Activated CD4-positive, alpha-beta T cell treated with anti-CD3 and anti-CD28 coated beads for 36 hours (primary cell): ENCODE measurements at regions of chr2 and their contacts with region 1.

Region 1: DNA sequence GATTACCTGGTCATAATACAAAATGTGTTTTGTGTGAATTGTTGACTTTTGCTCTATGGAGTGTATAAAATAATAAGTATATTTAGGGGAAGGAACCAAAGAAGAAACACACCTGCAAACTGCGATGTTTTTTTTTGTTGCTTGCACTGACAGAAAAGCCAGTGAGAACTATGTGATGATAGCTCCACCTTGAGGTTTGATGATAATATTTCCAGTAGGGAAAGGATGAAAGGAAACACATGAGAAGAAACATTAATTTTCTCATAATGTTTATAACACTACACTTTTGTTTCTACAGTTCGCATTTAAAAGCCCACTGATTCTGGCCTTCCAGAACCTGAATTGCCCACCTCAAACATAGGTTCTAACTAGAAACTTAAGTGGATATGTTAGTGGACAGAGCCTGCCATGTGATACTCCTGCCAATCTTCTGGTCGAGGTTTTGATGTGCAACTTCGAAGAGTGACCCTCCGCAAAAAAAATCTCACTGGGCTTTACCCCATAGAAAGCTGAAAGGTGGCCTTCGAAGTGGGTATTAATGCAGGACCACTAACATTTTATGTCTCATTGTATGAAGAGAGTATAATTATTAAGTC is 476.4 kb upstream of the SPHKAP start:
- DNase-seq: no peak
- ATAC-seq: no peak
- H3K4me3 Mint-ChIP-seq: no peak overlapping the region
- H3K27ac Mint-ChIP-seq: no peak overlapping the region
- H3K4me1 Mint-ChIP-seq: no peaks in the 10 kb centered on the region
- H3K27me3 Mint-ChIP-seq: no peaks in the 10 kb centered on the region

Region 2: GRCh38 chr2:227939271-227940027 is 718.5 kb before region 1 on chr2:
- CTCF ChIA-PET with region 1: no interaction called
- POLR2A ChIA-PET with region 1: no interaction called
- intact Hi-C with region 1: loop called in 1 of 2 experiments (anchors 10 kb)
- DNase-seq: peak; percentile 27
- ATAC-seq: no peak
- H3K4me3 Mint-ChIP-seq: no peak overlapping the region
- H3K27ac Mint-ChIP-seq: no peak overlapping the region
- H3K4me1 Mint-ChIP-seq: no peaks in the 10 kb centered on the region
- H3K27me3 Mint-ChIP-seq: peaks cover 17% of the 10 kb centered on the region

Region 3: GRCh38 chr2:228628682-228629081 is 29.2 kb before region 1 on chr2:
- CTCF ChIA-PET with region 1: no interaction called
- POLR2A ChIA-PET with region 1: no interaction called
- intact Hi-C with region 1: no loop called
- DNase-seq: no peak
- ATAC-seq: no peak
- H3K4me3 Mint-ChIP-seq: no peak overlapping the region
- H3K27ac Mint-ChIP-seq: no peak overlapping the region
- H3K4me1 Mint-ChIP-seq: no peaks in the 10 kb centered on the region
- H3K27me3 Mint-ChIP-seq: no peaks in the 10 kb centered on the region